Activated CD8-positive, alpha-beta T cell treated with anti-CD3 and anti-CD28 coated beads for 36 hours (primary cell): ENCODE measurements at regions of chr22 and their contacts with region 1.

Region 1: DNA sequence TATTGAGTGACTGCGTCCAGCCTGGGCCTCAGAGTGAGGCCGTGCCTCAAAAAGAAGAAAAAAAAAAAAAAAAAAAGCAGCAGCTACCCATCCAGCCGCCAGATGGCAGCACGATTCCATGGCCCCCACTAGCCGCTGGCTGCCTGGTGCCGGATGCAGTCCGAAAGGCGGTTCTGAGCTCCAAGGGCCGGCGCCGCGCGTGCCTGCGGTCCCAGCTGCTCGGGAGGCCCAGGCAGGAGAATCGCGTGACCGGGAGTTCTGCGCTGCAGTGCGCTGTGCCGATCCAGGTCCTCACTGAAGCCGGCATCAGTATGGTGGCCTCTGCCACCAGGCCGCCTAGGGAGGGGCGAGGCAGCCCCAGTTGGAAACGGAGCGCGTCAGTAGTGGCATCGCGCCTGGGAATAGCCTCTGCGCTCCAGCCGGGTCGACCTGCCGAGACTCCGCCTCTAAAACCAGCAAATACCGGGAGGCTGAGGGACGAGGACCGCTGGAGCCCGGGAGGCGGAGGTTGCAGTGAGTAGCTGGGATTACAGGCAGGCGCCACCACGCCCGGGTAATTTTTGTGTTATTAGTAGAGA is 19.3 kb downstream of the SCARF2 start:
- DNase-seq: peak; percentile 74
- ATAC-seq: peak; percentile 83
- H3K4me3 Mint-ChIP-seq: peak overlapping the region; percentile 19
- H3K27ac Mint-ChIP-seq: no peak overlapping the region
- H3K4me1 Mint-ChIP-seq: peaks cover 2% of the 10 kb centered on the region
- H3K27me3 Mint-ChIP-seq: no peaks in the 10 kb centered on the region
- CTCF ChIP-seq: peak; percentile 96

Region 2: DNA sequence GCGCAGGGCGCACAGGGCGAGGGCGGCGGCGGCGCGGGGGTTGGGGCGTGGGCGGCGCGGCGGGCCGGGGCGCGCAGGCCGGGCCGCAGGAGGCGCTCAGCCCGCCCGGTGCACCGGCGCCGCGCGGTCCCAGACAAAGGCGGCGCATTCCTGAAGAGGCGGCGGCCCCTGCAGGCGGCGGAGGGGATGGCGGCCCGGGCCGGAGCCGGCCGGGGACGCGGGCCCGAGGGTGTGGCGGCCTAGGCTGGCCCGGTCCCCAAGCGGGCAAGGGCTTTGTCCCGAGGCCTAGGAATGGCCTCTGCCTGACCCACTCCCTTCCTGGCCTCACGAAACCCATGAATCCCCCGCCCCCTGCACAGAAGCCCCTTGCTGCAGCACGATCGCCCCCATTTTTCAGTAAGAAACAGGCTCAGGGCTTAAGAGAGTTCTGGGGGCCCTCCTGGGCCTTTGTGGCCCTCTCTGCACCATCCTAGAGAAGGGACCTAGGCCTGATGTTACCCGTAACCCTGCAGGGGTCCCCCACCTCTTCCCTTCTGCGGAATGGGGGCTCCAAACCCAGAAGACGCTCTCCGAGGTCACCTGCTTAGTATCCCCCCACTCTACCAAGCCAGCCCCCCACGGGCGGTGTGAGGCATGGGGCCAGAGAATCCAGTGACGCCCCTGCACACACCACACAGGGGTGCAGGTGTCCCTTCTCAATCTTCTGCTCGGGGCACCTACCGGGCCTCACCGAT is 149.9 kb before region 1 on chr22 and contains the start of gene RTN4R:
- CTCF ChIA-PET with region 1: no interaction called
- POLR2A ChIA-PET with region 1: no interaction called
- intact Hi-C with region 1: no loop called
- DNase-seq: peak; percentile 65
- ATAC-seq: peak; percentile 86
- H3K4me3 Mint-ChIP-seq: peak within 1 kb of the TSS; percentile 54
- H3K27ac Mint-ChIP-seq: no peak within 1 kb of the TSS
- H3K4me1 Mint-ChIP-seq: peaks cover 3% of the 10 kb centered on the region
- H3K27me3 Mint-ChIP-seq: no peaks in the 10 kb centered on the region
- CTCF ChIP-seq: peak; percentile 54
- total RNA-seq, gene RTN4R: 2.8 to 3.7 TPM

Region 3: DNA sequence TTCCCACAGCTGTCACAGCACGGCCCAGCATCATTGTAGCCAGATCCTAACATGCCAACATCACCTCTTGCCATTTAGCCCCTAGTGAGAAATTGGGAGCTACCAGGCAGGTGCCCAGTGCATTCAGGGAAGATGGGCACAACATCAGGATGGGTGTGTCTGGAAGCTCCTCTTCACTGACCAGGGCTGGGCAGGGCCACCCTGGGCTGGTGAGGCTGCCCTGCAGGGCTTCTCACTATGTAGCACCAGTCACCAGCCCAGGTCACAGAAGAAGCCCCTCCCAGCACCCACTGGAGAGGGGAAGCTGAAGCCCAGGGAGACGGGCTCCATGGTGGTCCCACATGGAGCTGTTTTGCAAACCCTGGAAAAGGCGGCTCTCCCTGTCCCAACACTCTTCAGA is 10.5 kb before region 1 on chr22:
- CTCF ChIA-PET with region 1: interaction called, 11 read pairs
- POLR2A ChIA-PET with region 1: no interaction called
- intact Hi-C with region 1: no loop called
- DNase-seq: no peak
- ATAC-seq: no peak
- H3K4me3 Mint-ChIP-seq: no peak overlapping the region
- H3K27ac Mint-ChIP-seq: no peak overlapping the region
- H3K4me1 Mint-ChIP-seq: peaks cover 5% of the 10 kb centered on the region
- H3K27me3 Mint-ChIP-seq: no peaks in the 10 kb centered on the region
- CTCF ChIP-seq: no peak

Region 4: DNA sequence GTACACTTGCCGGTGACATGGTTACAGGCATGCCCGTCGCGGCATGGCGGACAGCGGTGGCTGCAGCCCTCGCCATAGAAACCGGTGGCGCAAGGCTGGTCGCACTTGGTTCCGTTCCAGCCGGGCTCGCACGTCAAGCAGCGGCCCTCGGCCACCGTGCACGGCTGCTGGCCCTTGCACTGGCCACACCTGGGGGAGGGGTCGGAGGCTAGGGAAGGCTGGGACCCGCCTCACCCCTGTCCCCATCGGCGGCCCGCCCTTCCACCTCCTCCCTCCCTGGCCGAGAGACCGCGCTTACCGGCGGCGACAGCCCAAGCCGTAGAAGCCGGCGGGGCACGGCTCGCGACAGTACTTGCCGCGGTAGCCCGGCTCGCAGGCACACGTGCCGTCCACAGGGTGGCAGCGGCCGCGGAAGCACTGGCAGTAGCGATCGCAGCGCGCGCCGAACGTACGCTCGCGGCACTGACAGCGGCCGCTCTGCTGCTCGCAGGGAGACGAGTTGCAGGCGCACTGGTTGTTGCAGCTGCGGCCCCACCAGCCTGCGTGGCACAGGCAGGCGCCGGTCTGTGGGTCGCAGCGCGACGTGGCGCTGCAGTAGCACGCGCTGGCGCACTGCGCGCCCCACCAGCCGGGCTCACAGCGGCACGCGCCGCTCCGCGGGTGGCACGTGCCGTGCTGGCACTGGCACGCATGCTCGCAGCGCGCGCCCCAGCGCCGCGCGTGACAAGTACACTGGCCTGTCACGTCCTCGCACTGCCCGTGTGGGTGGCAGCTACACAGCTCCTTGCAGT is 12.6 kb after region 1 on chr22:
- CTCF ChIA-PET with region 1: interaction called, 25 read pairs
- POLR2A ChIA-PET with region 1: interaction called, 3 read pairs
- intact Hi-C with region 1: no loop called
- DNase-seq: peak; percentile 65
- ATAC-seq: peak; percentile 47
- H3K4me3 Mint-ChIP-seq: peak overlapping the region; percentile 49
- H3K27ac Mint-ChIP-seq: no peak overlapping the region
- H3K4me1 Mint-ChIP-seq: peaks cover 15% of the 10 kb centered on the region
- H3K27me3 Mint-ChIP-seq: peaks cover 65% of the 10 kb centered on the region
- CTCF ChIP-seq: no peak

Region 5: DNA sequence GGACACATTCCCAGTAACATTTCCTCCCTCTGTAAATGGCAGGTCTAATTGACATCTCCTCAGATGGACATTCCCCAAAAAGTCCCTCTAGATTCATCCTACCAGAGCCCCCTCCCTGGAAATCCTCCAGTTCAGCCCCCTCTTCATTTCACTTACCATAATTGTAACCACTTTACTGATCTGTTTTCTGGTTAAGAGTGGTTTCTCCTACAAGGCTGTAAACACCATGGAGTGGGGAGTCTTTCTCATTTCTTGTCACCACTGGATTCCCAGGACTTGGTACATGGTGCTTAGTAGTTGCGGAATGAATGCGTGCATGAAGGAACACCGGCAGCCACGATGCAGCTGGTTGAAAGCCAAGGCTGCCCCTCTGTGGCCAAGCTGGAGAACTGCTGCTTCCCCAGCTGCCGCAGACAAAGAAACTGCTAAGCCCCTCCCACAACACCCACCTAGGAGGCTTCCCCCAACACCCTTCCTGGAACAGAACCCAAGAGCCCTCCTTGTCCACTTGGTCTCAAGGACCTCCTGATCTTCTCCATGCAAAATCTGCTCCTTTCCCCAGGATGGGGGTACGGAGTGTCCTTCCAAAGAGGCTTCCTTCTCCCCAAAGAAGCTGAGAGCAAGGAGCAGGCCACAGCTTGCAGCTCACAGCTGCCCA is 37.9 kb after region 1 on chr22:
- CTCF ChIA-PET with region 1: interaction called, 55 read pairs
- POLR2A ChIA-PET with region 1: interaction called, 3 read pairs
- intact Hi-C with region 1: loop called (anchors 5 kb)
- DNase-seq: peak; percentile 83
- ATAC-seq: peak; percentile 100
- H3K4me3 Mint-ChIP-seq: no peak overlapping the region
- H3K27ac Mint-ChIP-seq: peak overlapping the region; percentile 41
- H3K4me1 Mint-ChIP-seq: peaks cover 15% of the 10 kb centered on the region
- H3K27me3 Mint-ChIP-seq: no peaks in the 10 kb centered on the region
- CTCF ChIP-seq: peak; percentile 87

Region 6: GRCh38 chr22:20463324-20464095 is 45.2 kb after region 1 on chr22:
- CTCF ChIA-PET with region 1: interaction called, 12 read pairs
- POLR2A ChIA-PET with region 1: interaction called, 3 read pairs
- intact Hi-C with region 1: loop called (anchors 5 kb)
- DNase-seq: peak; percentile 53
- ATAC-seq: peak; percentile 62
- H3K4me3 Mint-ChIP-seq: peak overlapping the region; percentile 37
- H3K27ac Mint-ChIP-seq: peak overlapping the region; percentile 97
- H3K4me1 Mint-ChIP-seq: peaks cover 48% of the 10 kb centered on the region
- H3K27me3 Mint-ChIP-seq: no peaks in the 10 kb centered on the region
- CTCF ChIP-seq: no peak

Region 7: DNA sequence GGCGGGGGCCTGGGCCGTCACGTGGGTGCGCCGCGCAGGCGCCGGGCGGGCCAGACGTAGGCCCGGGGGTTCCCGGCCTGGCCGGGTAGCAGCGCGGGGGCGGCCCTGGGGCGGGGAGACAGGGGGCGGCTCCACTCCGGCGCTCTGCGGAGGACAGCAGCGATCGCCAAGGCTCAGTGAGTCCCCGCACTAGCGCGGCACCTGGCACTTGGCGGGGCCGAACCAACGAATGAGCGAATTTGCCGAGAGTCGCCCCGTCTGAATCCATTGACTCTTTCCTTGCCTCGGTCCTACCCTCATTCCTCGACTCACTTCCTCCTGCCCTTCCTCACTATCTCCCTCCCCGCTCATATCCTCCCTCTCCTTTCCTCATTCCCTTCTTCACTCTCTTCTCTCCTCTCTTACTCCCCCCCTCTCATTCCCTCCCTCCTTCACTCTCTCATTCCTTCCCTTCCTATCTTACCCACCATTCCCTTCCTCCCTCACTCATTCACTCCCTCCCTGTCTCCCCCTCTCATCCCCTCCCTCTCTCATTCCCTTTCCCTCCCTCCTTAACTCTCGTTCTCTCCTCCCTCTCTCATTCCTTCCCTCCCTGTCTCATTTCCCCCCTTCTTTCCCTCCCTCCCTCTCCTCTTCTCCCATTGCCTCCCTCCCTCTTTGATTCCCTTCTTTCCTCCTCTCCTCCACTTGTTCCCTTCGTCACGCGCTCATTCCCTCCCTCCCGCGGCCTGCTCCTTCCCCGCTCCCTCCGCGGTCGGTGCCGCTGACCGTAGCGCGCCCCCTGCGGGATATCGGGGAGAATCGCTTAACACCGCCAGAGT is 77.8 kb after region 1 on chr22:
- CTCF ChIA-PET with region 1: interaction called, 10 read pairs
- POLR2A ChIA-PET with region 1: no interaction called
- intact Hi-C with region 1: no loop called
- DNase-seq: peak; percentile 94
- ATAC-seq: peak; percentile 98
- H3K4me3 Mint-ChIP-seq: peak overlapping the region; percentile 88
- H3K27ac Mint-ChIP-seq: peak overlapping the region; percentile 84
- H3K4me1 Mint-ChIP-seq: peaks cover 34% of the 10 kb centered on the region
- H3K27me3 Mint-ChIP-seq: no peaks in the 10 kb centered on the region
- CTCF ChIP-seq: peak; percentile 95